Activated CD4-positive, alpha-beta T cell treated with anti-CD3 and anti-CD28 coated beads, Interleukin-2, amount 10 ng/mL, durations not matched to agents 24 days and 14 days (primary cell): ENCODE measurements at regions of chr20 and their contacts with region 1.

Region 1: GRCh38 chr20:2651772-2652723 is at the start of gene NOP56:
- DNase-seq: peak; percentile 99
- H3K4me3 Mint-ChIP-seq: peak within 1 kb of the TSS; percentile 94
- H3K27ac Mint-ChIP-seq: peak within 1 kb of the TSS; percentile 92
- H3K4me1 Mint-ChIP-seq: peaks cover 32% of the 10 kb centered on the region
- H3K27me3 Mint-ChIP-seq: no peaks in the 10 kb centered on the region
- total RNA-seq, gene NOP56: 884 and 899 TPM in 2 replicates

Region 2: GRCh38 chr20:2451939-2452732 is 199.9 kb before region 1 on chr20:
- intact Hi-C with region 1: loop called (anchors 5 kb)
- DNase-seq: peak; percentile 90
- H3K4me3 Mint-ChIP-seq: no peak overlapping the region
- H3K27ac Mint-ChIP-seq: no peak overlapping the region
- H3K4me1 Mint-ChIP-seq: peaks cover 23% of the 10 kb centered on the region
- H3K27me3 Mint-ChIP-seq: peaks cover 6% of the 10 kb centered on the region

Region 3: DNA sequence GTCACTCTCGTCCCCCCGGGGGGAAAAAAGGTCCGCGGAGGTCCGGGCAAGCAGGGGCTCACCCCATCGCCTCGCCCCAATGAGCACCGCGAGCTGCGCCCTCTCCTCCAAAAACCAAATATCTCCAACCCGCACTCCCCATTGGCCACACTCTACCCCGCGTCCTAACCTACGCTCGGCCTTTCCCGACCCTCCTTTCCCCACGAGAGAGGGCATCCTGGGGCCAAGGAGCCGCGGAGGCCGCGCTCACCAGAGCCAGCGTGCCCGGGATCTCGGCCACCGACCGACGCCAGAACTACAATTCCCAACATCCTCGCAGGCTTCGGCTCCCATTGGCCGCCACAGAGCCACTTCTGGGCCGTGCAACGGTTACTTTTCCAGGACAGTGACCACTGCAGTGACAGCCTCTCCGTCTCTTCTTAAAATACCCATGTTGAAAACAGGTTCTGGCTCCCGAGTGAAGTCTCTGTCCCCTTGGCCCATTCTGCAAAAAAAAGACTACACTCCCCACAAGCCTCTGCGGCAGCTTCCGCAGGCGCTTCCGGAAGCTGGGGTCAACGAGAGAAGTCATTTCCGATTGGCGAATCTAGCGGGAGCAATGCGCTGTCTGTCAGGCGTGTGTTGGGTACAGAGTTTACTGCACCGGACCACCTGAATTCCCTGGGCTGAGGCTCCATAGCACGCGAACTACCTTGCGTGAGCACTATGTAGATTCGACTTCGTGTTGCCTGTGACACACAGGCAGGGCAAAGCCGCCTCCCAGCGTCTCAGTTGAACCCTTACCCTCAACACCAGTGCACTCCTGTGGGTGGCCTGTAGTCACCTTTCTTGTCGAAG is 143.2 kb before region 1 on chr20 and contains the start of gene ZNF343:
- intact Hi-C with region 1: loop called (anchors 5 kb)
- DNase-seq: peak; percentile 94
- H3K4me3 Mint-ChIP-seq: peak within 1 kb of the TSS; percentile 99
- H3K27ac Mint-ChIP-seq: peak within 1 kb of the TSS; percentile 98
- H3K4me1 Mint-ChIP-seq: peaks cover 13% of the 10 kb centered on the region
- H3K27me3 Mint-ChIP-seq: peaks cover 20% of the 10 kb centered on the region
- total RNA-seq, gene ZNF343: 18.9 and 21.4 TPM in 2 replicates

Region 4: DNA sequence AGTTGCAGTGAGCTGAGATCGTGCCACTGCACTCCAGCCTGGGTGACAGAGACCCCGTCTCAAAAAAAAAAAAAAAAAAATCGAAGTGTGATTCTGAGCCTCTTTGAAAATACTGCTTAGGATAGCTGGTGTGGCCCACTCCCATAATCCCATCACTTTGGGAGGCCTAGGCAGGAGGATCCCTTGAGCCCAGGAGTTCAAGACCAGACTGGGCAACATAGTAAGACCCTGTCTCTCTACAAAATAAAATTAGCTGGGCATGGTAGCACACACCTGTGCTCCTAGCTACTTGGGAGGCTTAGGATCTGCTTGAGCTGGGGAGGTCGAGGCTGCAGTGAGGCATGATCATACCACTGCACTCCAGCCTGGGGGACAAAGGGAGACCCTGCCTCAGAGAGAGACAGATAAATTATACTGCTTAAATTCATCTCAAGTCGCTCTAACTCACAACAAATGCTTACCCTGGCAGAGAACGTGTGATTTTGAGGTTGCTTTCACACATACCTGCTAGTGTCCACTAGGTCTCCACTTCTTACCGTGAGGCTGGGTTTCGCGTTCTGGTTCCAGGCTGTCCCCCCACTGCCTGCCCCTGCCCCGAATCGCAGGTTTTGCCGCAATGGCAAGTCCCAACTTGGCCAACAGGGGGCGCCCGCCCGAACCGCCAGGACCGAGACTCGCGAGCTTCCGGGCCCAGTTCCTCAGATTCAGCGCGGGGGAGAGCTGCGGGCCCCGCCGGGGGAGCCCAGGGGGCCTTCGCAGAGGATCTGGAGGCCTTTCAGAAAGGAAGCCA is 127.9 kb before region 1 on chr20:
- intact Hi-C with region 1: loop called (anchors 2 kb)
- DNase-seq: peak; percentile 98
- H3K4me3 Mint-ChIP-seq: peak overlapping the region; percentile 85
- H3K27ac Mint-ChIP-seq: peak overlapping the region; percentile 93
- H3K4me1 Mint-ChIP-seq: peaks cover 20% of the 10 kb centered on the region
- H3K27me3 Mint-ChIP-seq: peaks cover 5% of the 10 kb centered on the region

Region 5: GRCh38 chr20:2663887-2664719 is 12.1 kb after region 1 on chr20 and contains the start of gene IDH3B:
- intact Hi-C with region 1: loop called (anchors 1 kb)
- DNase-seq: peak; percentile 98
- H3K4me3 Mint-ChIP-seq: peak within 1 kb of the TSS; percentile 85
- H3K27ac Mint-ChIP-seq: peak within 1 kb of the TSS; percentile 94
- H3K4me1 Mint-ChIP-seq: peaks cover 15% of the 10 kb centered on the region
- H3K27me3 Mint-ChIP-seq: peaks cover 5% of the 10 kb centered on the region
- total RNA-seq, gene IDH3B: 121 and 127 TPM in 2 replicates

Region 6: GRCh38 chr20:2840138-2840966 is 188.3 kb after region 1 on chr20 and contains the starts of genes PCED1A and VPS16:
- intact Hi-C with region 1: loop called (anchors 2 kb)
- DNase-seq: peak; percentile 97
- H3K4me3 Mint-ChIP-seq: peak within 1 kb of the TSS; percentile 91
- H3K27ac Mint-ChIP-seq: peak within 1 kb of the TSS; percentile 91
- H3K4me1 Mint-ChIP-seq: peaks cover 20% of the 10 kb centered on the region
- H3K27me3 Mint-ChIP-seq: peaks cover 1% of the 10 kb centered on the region
- total RNA-seq, gene PCED1A: 23.4 and 26.1 TPM in 2 replicates
- total RNA-seq, gene VPS16: 44.3 and 44.9 TPM in 2 replicates